ENCODE measurements at regions of chr16 and their contacts with region 1.

Region 1: GRCh38 chr16:17377360-17378324 is 93.1 kb downstream of the XYLT1 start:
- DNase-seq: peak in 2 of 14 experiments; percentile 51 to 62
- ATAC-seq: no peak
- H3K4me3 ChIP-seq: no peak overlapping the region
- H3K4me3 Mint-ChIP-seq: peak overlapping the region; percentile 46
- H3K27ac ChIP-seq: peak overlapping the region in 1 of 2 donors; percentile 10
- H3K27ac Mint-ChIP-seq: peak overlapping the region; percentile 66
- H3K4me1 ChIP-seq: peaks cover 57% of the 10 kb centered on the region
- H3K4me1 Mint-ChIP-seq: peaks cover 82% of the 10 kb centered on the region
- H3K27me3 ChIP-seq: no peaks in the 10 kb centered on the region
- H3K27me3 Mint-ChIP-seq: no peaks in the 10 kb centered on the region
- CTCF ChIP-seq: no peak

Region 2: GRCh38 chr16:17289674-17290635 is 87.7 kb before region 1 on chr16:
- CTCF ChIA-PET with region 1: interaction called, 3 read pairs
- POLR2A ChIA-PET with region 1: no interaction called
- intact Hi-C with region 1: loop called in 1 of 2 experiments (anchors 5 kb)
- DNase-seq: no peak
- ATAC-seq: no peak
- H3K4me3 ChIP-seq: no peak overlapping the region
- H3K4me3 Mint-ChIP-seq: no peak overlapping the region
- H3K27ac ChIP-seq: no peak overlapping the region
- H3K27ac Mint-ChIP-seq: no peak overlapping the region
- H3K4me1 ChIP-seq: no peaks in the 10 kb centered on the region
- H3K4me1 Mint-ChIP-seq: peaks cover 19% of the 10 kb centered on the region
- H3K27me3 ChIP-seq: no peaks in the 10 kb centered on the region
- H3K27me3 Mint-ChIP-seq: no peaks in the 10 kb centered on the region
- CTCF ChIP-seq: no peak

Measured in CD4-positive, alpha-beta T cell (primary cell).